Natural killer cell (primary cell): ENCODE measurements at regions of chr6 and their contacts with region 1.

Region 1: DNA sequence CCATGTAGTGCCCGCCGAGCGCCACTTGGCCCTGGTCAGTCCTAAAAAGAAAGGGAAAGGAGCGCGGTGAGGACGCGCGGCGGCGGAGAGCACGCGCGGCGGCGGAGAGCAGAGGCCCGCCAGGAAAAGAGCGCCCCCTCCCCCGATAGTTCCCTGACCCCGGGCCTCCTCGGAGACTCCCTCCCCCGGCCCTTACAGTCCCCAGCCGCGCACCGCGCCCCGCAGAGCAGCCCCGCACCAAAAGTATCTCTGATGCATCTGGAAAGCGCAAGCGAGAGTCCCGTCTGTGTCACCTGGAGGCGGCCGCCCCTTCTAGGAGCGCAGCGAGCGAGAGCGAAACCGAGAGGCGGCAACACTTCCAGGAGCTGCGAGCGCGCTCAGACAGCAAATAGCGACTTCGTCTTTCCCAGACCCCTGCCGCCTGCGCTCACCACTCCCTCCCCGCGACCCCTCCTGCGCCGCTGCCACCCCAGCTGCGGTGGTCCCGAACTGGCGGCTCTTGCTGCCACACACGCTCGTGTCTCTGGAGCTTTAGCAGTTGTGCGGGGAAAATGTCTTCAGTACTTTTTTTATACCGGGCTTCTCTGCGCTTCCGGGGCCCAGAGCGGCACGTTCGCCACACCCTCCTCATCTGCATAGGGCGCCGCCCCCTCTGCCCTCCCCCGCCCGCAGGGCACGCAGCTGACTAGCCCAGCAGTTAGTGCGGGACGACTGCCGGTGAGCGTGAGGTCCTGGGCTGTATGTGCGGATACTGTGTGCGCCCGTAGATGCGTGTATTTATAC is at the start of gene TENT5A:
- DNase-seq: peak; percentile 90 to 91
- ATAC-seq: peak; percentile 71 to 88 (median 74)
- H3K4me3 ChIP-seq: peak within 1 kb of the TSS; percentile 93
- H3K4me3 Mint-ChIP-seq: peak within 1 kb of the TSS; percentile 99
- H3K27ac ChIP-seq: peak within 1 kb of the TSS; percentile 96
- H3K27ac Mint-ChIP-seq: peak within 1 kb of the TSS; percentile 97 to 98
- H3K4me1 ChIP-seq: peaks cover 29% of the 10 kb centered on the region
- H3K4me1 Mint-ChIP-seq: peaks cover 52 to 56% of the 10 kb centered on the region in 2 donors
- H3K27me3 ChIP-seq: no peaks in the 10 kb centered on the region
- H3K27me3 Mint-ChIP-seq: peaks cover 0 to 6% of the 10 kb centered on the region in 2 donors
- CTCF ChIP-seq: no peak
- total RNA-seq, gene TENT5A: 22.9 to 23.8 (median 22.9) TPM

Region 2: DNA sequence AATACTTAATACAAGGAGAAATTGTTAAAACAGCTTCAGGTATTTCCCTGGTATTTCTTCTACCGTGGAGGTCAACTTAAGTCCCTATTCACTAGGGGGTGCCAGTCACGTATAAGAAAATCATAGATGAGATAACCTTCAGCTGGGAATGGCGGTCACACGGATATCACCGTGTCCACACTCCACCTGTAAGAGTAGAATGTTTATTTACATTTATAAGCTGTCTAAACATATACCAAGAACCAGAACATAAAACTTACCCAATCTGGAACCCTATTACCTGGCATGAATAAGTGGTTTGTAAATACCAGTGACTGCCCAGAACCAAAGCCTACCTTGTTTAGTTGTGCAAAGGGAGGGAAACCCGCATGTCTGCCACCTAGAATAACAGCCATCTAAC is 1803.1 kb before region 1 on chr6:
- intact Hi-C with region 1: loop called (anchors 5 kb)
- DNase-seq: peak in 1 of 2 donors; percentile 89
- ATAC-seq: peak; percentile 46 to 53 (median 52)
- H3K4me3 ChIP-seq: no peak overlapping the region
- H3K4me3 Mint-ChIP-seq: no peak overlapping the region
- H3K27ac ChIP-seq: no peak overlapping the region
- H3K27ac Mint-ChIP-seq: no peak overlapping the region
- H3K4me1 ChIP-seq: peaks cover 13% of the 10 kb centered on the region
- H3K4me1 Mint-ChIP-seq: peaks cover 17 to 21% of the 10 kb centered on the region in 2 donors
- H3K27me3 ChIP-seq: peaks cover 21% of the 10 kb centered on the region
- H3K27me3 Mint-ChIP-seq: peaks cover 25 to 36% of the 10 kb centered on the region in 2 donors
- CTCF ChIP-seq: peak; percentile 70

Region 3: DNA sequence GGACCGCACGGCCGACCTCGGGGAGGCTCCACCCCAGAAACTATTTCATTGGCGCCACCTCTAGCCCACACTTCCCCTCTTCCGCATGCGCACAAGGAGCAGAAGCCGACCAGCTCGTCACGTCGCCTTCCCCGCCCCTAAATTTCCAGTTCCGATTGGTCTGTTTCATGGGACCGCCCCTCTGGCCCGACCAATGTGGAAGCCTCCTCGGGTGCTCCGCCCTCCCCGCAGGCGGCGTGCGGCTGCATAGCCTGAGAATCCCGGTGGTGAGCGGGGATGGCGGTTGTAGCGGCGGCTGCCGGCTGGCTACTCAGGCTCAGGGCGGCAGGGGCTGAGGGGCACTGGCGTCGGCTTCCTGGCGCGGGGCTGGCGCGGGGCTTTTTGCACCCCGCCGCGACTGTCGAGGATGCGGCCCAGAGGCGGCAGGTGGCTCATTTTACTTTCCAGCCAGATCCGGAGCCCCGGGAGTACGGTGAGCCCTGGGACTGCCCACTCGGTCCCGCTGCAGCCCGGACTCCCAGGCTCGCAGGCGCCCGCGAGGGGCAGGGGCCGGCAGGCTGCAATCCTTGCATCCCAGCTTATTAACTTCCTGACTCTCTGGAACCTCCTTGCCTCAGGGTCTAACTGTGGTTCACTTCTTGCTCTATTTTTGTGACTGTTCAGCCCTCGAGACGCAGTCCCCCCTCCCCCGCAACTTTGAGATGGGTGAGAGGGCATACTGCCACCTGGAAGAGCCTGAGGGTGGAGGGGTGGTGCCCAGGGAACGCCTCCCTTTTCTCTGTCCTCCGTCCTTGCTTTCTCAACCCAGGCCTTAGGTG is 1645.7 kb before region 1 on chr6 and contains the start of gene BCKDHB:
- intact Hi-C with region 1: loop called (anchors 1 kb)
- DNase-seq: peak; percentile 93 to 99
- ATAC-seq: peak; percentile 96 to 99 (median 97)
- H3K4me3 ChIP-seq: peak within 1 kb of the TSS; percentile 75
- H3K4me3 Mint-ChIP-seq: peak within 1 kb of the TSS; percentile 95
- H3K27ac ChIP-seq: peak within 1 kb of the TSS; percentile 63
- H3K27ac Mint-ChIP-seq: peak within 1 kb of the TSS; percentile 84 to 86
- H3K4me1 ChIP-seq: peaks cover 5% of the 10 kb centered on the region
- H3K4me1 Mint-ChIP-seq: peaks cover 16 to 21% of the 10 kb centered on the region in 2 donors
- H3K27me3 ChIP-seq: no peaks in the 10 kb centered on the region
- H3K27me3 Mint-ChIP-seq: peaks cover 18 to 21% of the 10 kb centered on the region in 2 donors
- CTCF ChIP-seq: no peak
- total RNA-seq, gene BCKDHB: 11.1 to 13.7 (median 12.8) TPM

Region 4: GRCh38 chr6:80338201-80338836 is 1414.0 kb before region 1 on chr6:
- intact Hi-C with region 1: loop called (anchors 1 kb)
- DNase-seq: peak; percentile 65 to 71
- ATAC-seq: peak; percentile 70 to 92 (median 90)
- H3K4me3 ChIP-seq: no peak overlapping the region
- H3K4me3 Mint-ChIP-seq: no peak overlapping the region
- H3K27ac ChIP-seq: no peak overlapping the region
- H3K27ac Mint-ChIP-seq: no peak overlapping the region
- H3K4me1 ChIP-seq: no peaks in the 10 kb centered on the region
- H3K4me1 Mint-ChIP-seq: peaks cover 6 to 11% of the 10 kb centered on the region in 2 donors
- H3K27me3 ChIP-seq: no peaks in the 10 kb centered on the region
- H3K27me3 Mint-ChIP-seq: no peaks in the 10 kb centered on the region
- CTCF ChIP-seq: peak; percentile 77

Region 5: DNA sequence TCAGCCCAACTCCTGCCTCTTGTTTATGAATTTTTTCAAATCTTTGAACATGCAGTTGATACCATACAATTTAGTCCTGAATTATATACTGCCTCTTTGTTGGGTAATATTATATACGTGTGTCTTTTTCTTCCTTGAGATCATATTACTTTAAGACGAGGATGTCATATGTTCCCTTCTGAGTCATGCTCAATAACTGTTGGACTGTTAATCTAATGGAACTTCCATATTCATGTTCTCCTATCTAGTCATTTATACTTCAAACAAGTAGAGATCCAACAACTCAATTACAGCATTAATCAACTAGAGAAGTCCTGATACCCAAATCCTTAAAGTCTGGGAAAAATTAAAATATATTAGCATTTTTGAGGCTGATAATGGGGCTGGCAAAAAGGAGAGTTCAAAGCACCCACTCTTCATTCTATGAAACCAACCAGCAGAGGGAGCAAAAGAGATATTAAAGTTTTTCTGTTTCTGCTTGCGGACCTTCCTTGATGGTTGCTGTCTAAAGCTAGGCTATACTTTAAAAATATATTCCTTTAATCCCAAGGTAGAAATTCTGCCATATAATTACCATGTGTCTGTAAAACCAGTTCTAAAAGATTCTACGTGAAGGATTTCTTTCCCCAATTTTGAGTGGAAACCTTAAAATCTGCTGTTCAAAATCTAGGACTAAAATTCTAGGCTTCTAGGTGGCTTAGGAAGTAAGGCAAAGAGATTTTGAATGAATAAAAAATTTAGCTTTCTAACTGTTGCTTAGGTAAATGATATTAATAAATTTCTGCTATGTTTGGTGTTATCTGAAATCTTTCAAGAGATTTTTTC is 1147.0 kb before region 1 on chr6:
- intact Hi-C with region 1: loop called (anchors 1 kb)
- DNase-seq: peak in 1 of 2 donors; percentile 31
- ATAC-seq: peak in 2 of 3 donors; percentile 55
- H3K4me3 ChIP-seq: no peak overlapping the region
- H3K4me3 Mint-ChIP-seq: no peak overlapping the region
- H3K27ac ChIP-seq: no peak overlapping the region
- H3K27ac Mint-ChIP-seq: no peak overlapping the region
- H3K4me1 ChIP-seq: no peaks in the 10 kb centered on the region
- H3K4me1 Mint-ChIP-seq: no peaks in the 10 kb centered on the region
- H3K27me3 ChIP-seq: no peaks in the 10 kb centered on the region
- H3K27me3 Mint-ChIP-seq: no peaks in the 10 kb centered on the region
- CTCF ChIP-seq: peak; percentile 61

Region 6: DNA sequence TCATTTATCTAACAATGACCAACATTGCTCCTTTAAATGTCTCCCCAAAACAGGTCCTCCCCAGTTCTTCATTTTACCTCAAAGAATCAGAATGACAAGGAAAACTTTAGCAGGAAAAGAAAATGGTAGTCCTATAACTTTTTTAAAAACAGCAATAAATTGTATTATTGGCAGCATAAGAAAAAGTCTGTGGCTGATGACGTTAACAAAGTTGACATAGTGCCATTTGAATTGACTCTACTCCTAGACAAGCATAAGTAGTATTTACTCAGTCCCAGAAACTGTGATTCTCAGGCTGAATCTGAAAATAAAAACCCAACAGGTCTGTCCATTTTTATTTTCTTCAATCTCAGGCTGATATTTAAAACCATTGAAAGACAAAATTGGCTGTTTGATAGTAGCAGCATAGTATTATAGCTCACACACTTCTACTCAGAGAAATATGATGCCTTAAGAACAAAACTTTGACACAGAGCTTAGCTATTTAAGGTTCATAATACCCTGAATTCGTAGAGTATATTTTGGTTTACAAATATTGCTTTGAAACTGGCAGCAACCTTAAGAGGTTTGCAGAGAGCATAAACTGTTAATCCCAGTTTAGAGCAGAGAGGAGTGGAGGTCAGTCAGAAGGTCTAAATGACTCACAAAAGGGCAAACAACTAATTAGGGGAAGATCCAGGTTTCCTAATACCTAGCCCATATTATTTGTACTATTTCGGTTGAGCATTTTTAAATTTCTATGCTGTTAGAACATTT is 35.2 kb after region 1 on chr6:
- intact Hi-C with region 1: no loop called
- DNase-seq: no peak
- ATAC-seq: no peak
- H3K4me3 ChIP-seq: no peak overlapping the region
- H3K4me3 Mint-ChIP-seq: no peak overlapping the region
- H3K27ac ChIP-seq: no peak overlapping the region
- H3K27ac Mint-ChIP-seq: no peak overlapping the region
- H3K4me1 ChIP-seq: no peaks in the 10 kb centered on the region
- H3K4me1 Mint-ChIP-seq: no peaks in the 10 kb centered on the region
- H3K27me3 ChIP-seq: no peaks in the 10 kb centered on the region
- H3K27me3 Mint-ChIP-seq: no peaks in the 10 kb centered on the region
- CTCF ChIP-seq: no peak

Region 7: DNA sequence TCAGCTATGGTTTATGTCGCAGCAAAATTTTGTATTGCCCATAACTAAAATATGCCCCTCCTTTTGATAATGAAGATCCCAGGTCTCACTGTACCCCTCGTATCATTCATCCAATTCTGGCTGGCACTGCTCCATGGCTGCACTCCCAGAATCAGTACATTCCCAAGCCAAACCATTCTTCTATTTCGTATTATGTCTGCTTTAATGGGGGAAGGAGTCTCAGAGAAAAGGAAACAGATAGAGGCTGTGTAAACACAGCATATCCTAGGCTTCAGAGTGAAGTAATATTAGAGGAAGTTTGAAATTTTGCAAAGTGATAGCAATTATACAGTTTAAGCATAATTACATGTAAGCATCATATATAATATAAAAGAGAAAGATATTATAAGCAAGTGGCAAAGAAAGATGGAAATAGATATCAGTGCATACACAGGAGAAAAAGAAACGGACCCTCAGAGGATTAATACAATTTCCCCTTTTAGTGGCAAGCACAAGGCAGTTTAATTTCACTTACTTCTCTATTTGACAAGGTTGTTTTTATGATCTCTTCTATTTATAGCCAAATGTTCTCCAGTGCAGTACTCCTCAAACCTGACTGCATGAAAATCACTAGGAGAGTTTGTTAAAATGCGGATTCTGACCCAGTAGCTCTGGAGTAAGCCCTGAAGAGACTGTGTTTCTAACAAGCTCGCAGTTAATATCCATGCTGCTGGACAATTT is 56.7 kb after region 1 on chr6:
- intact Hi-C with region 1: no loop called
- DNase-seq: no peak
- ATAC-seq: no peak
- H3K4me3 ChIP-seq: no peak overlapping the region
- H3K4me3 Mint-ChIP-seq: no peak overlapping the region
- H3K27ac ChIP-seq: peak overlapping the region; percentile 43
- H3K27ac Mint-ChIP-seq: no peak overlapping the region
- H3K4me1 ChIP-seq: no peaks in the 10 kb centered on the region
- H3K4me1 Mint-ChIP-seq: peaks cover 0 to 6% of the 10 kb centered on the region in 2 donors
- H3K27me3 ChIP-seq: no peaks in the 10 kb centered on the region
- H3K27me3 Mint-ChIP-seq: peaks cover 3 to 5% of the 10 kb centered on the region in 2 donors
- CTCF ChIP-seq: no peak